ENCODE measurements at regions of chr12 and their contacts with region 1.

Region 1: DNA sequence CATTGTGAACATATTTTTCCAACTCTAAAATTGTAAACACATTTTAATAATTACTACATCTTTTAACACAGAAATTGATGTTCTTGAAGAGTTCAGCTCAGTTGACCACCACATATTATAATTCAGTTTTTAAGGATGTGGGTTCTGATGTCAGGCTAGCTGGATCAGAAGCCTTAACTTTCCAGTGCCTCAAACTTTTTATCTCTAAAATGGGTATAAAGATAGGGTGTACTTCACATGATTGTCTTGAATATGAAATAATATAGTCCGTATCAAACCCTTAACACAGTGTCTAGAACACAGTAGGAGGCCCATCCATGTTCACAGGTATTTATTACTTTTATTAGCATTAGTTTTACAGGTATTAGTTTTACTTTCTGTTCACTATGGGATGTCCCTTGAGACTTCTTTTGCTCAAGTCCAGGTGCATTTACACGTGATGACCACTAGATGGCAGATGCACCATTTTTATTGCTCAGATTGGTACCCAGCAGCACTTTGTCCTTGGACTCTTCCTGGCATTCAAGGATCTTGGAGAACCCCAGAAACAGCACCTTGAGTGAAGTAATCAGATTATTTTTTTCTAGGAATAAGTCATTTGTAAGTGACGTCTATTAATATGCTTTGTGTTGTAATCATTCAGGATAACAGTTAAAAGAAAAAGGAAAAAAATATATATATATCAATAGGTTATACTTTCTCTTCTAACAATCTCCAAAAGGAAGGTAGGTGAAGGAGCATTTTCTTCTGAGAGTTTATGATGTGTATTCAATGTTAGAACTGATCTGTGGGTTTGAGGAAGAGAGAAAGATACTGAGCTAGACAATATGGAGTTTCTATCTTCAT is 580.2 kb downstream of the ETNK1 start:
- DNase-seq: no peak
- ATAC-seq: peak; percentile 92
- H3K4me3 Mint-ChIP-seq: no peak overlapping the region
- H3K27ac Mint-ChIP-seq: no peak overlapping the region
- H3K4me1 Mint-ChIP-seq: no peaks in the 10 kb centered on the region
- H3K27me3 Mint-ChIP-seq: peaks cover 5% of the 10 kb centered on the region
- CTCF ChIP-seq: peak; percentile 68

Region 2: GRCh38 chr12:22684140-22685118 is 520.7 kb before region 1 on chr12:
- CTCF ChIA-PET with region 1: no interaction called
- POLR2A ChIA-PET with region 1: no interaction called
- intact Hi-C with region 1: loop called (anchors 2 kb)
- DNase-seq: no peak
- ATAC-seq: peak; percentile 54
- H3K4me3 Mint-ChIP-seq: no peak overlapping the region
- H3K27ac Mint-ChIP-seq: no peak overlapping the region
- H3K4me1 Mint-ChIP-seq: peaks cover 26% of the 10 kb centered on the region
- H3K27me3 Mint-ChIP-seq: no peaks in the 10 kb centered on the region
- CTCF ChIP-seq: peak; percentile 54

Region 3: DNA sequence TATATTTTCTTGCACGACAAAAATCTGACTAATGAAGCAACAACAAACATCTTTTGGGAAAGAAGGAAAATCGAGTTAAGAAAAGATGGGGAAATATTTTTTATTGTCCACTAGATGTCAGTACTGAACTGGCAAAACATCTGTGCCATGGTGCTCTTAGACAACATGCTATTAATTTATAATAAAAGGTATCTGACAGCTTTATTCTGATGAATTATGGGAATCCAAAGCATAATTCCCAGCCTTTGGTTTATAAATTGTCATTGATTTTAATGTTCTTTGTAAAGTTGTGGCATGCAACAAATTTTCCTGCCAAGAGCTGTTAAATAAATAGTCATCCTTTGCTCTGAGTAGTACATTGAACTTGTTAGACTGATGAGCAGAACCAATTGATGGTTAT is 349.0 kb before region 1 on chr12:
- CTCF ChIA-PET with region 1: no interaction called
- POLR2A ChIA-PET with region 1: no interaction called
- intact Hi-C with region 1: loop called (anchors 5 kb)
- DNase-seq: no peak
- ATAC-seq: no peak
- H3K4me3 Mint-ChIP-seq: no peak overlapping the region
- H3K27ac Mint-ChIP-seq: no peak overlapping the region
- H3K4me1 Mint-ChIP-seq: no peaks in the 10 kb centered on the region
- H3K27me3 Mint-ChIP-seq: peaks cover 5% of the 10 kb centered on the region
- CTCF ChIP-seq: no peak

Region 4: DNA sequence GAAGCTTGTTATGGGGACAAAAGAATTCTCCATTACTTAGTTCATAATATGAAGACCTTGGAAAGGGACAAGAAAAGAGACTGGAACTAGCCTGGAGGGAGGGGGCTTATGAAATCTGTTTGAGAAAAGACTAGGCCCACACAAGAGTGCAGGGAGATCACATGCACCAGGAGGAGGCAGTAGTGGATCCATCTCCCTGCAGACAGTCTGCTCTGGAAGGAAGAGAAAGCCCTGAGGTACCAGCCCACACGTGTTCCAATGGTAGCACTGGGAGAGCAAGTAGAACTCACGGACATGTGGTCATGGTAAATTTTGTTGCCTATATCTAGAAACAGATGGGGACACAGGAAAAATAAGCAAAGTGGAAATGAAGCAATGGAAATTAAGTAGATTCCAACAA is 298.9 kb after region 1 on chr12:
- CTCF ChIA-PET with region 1: no interaction called
- POLR2A ChIA-PET with region 1: no interaction called
- intact Hi-C with region 1: no loop called
- DNase-seq: no peak
- ATAC-seq: no peak
- H3K4me3 Mint-ChIP-seq: no peak overlapping the region
- H3K27ac Mint-ChIP-seq: no peak overlapping the region
- H3K4me1 Mint-ChIP-seq: no peaks in the 10 kb centered on the region
- H3K27me3 Mint-ChIP-seq: no peaks in the 10 kb centered on the region
- CTCF ChIP-seq: no peak

Region 5: GRCh38 chr12:24025153-24025798 is 820.1 kb after region 1 on chr12:
- CTCF ChIA-PET with region 1: no interaction called
- POLR2A ChIA-PET with region 1: no interaction called
- intact Hi-C with region 1: loop called (anchors 10 kb)
- DNase-seq: no peak
- ATAC-seq: no peak
- H3K4me3 Mint-ChIP-seq: no peak overlapping the region
- H3K27ac Mint-ChIP-seq: no peak overlapping the region
- H3K4me1 Mint-ChIP-seq: no peaks in the 10 kb centered on the region
- H3K27me3 Mint-ChIP-seq: no peaks in the 10 kb centered on the region
- CTCF ChIP-seq: no peak

Region 6: GRCh38 chr12:24109381-24110039 is 904.4 kb after region 1 on chr12:
- CTCF ChIA-PET with region 1: interaction called, 3 read pairs
- POLR2A ChIA-PET with region 1: no interaction called
- intact Hi-C with region 1: loop called (anchors 1 kb)
- DNase-seq: no peak
- ATAC-seq: peak; percentile 64
- H3K4me3 Mint-ChIP-seq: no peak overlapping the region
- H3K27ac Mint-ChIP-seq: no peak overlapping the region
- H3K4me1 Mint-ChIP-seq: peaks cover 5% of the 10 kb centered on the region
- H3K27me3 Mint-ChIP-seq: no peaks in the 10 kb centered on the region
- CTCF ChIP-seq: peak; percentile 36

Measured in activated B cell treated with CpG ODN at 0.5 μM for 24 hours (primary cell).